ENCODE measurements at regions of chr14 and their contacts with region 1.

Region 1: GRCh38 chr14:52824507-52824906 is 33.1 kb upstream of the GNPNAT1 start:
- DNase-seq: no peak
- H3K4me3 ChIP-seq: peak overlapping the region in 3 of 59 donors; percentile 7 to 19 (median 18)
- H3K27ac ChIP-seq: no peak overlapping the region
- H3K27me3 ChIP-seq: no peaks in the 10 kb centered on the region
- CTCF ChIP-seq: no peak

Region 2: DNA sequence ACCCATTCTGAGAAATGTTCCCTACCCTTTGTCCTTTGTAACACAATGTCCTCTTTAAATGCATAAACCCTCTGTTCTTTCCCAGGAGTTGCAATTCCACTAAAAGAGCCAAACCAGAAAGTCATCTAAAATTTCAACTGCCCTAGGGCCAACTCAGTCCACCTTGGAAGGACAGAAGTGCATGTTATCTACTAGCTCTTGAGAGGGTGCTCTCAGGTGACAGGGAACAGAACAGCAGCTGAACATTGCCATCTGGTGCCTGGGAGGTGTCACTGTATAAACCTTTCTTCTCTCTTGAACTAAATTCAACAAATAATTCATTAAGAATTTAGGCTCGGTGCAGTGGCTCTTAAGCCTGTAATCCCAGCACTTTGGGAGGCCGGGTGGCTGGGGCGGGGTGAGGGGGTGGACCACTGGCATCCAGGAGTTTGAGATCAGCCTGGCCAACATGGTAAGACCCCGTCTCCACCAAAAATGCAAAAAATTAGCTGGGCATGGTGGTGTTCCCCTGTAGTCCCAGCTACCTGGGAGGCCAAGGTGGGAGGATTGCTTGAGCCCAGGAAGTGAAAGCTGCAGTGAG is 136.6 kb after region 1 on chr14:
- intact Hi-C with region 1: loop called in 1 of 2 experiments (anchors 5 kb)
- DNase-seq: peak in 2 of 10 donors; percentile 11 to 50
- H3K4me3 ChIP-seq: no peak overlapping the region
- H3K27ac ChIP-seq: peak overlapping the region in 22 of 59 donors; percentile 4 to 68 (median 32)
- H3K27me3 ChIP-seq: no peaks in the 10 kb centered on the region
- CTCF ChIP-seq: peak in 55 of 56 donors; percentile 36 to 81 (median 59)

Region 3: DNA sequence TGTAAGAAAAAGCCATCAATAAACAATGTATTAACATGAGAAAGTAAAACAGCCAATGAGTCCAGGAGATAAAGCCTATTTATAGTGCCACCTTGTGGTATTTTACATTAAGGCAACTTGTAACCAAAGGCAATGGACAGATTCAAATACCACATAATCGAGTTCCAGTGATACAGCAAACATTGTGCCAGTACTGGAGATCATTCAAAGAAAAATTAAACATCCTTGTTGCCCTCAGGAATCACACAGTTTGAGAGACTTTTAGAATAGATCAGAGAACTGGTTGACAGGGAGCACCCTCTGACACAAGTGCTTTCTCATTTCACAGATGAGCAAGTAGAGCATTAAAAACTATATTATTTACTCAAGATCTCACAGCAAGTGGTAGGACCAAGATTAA is 230.5 kb after region 1 on chr14:
- intact Hi-C with region 1: loop called (anchors 5 kb)
- DNase-seq: no peak
- H3K4me3 ChIP-seq: no peak overlapping the region
- H3K27ac ChIP-seq: peak overlapping the region in 29 of 59 donors; percentile 5 to 73 (median 44)
- H3K27me3 ChIP-seq: no peaks in the 10 kb centered on the region
- CTCF ChIP-seq: peak; percentile 65 to 94 (median 83)

Measured in dorsolateral prefrontal cortex (tissue), 120 donors.